ENCODE measurements at regions of chr13 and their contacts with region 1.

Region 1: GRCh38 chr13:48975856-48976575 is at the start of gene FNDC3A:
- DNase-seq: peak; percentile 84
- H3K4me3 ChIP-seq: peak within 1 kb of the TSS; percentile 57 to 77 (median 60)
- H3K27ac ChIP-seq: peak within 1 kb of the TSS; percentile 77
- H3K4me1 ChIP-seq: peaks cover 8% of the 10 kb centered on the region
- H3K27me3 ChIP-seq: no peaks in the 10 kb centered on the region
- CTCF ChIP-seq: no peak
- total RNA-seq, gene FNDC3A: 40.0 to 67.2 TPM

Region 2: DNA sequence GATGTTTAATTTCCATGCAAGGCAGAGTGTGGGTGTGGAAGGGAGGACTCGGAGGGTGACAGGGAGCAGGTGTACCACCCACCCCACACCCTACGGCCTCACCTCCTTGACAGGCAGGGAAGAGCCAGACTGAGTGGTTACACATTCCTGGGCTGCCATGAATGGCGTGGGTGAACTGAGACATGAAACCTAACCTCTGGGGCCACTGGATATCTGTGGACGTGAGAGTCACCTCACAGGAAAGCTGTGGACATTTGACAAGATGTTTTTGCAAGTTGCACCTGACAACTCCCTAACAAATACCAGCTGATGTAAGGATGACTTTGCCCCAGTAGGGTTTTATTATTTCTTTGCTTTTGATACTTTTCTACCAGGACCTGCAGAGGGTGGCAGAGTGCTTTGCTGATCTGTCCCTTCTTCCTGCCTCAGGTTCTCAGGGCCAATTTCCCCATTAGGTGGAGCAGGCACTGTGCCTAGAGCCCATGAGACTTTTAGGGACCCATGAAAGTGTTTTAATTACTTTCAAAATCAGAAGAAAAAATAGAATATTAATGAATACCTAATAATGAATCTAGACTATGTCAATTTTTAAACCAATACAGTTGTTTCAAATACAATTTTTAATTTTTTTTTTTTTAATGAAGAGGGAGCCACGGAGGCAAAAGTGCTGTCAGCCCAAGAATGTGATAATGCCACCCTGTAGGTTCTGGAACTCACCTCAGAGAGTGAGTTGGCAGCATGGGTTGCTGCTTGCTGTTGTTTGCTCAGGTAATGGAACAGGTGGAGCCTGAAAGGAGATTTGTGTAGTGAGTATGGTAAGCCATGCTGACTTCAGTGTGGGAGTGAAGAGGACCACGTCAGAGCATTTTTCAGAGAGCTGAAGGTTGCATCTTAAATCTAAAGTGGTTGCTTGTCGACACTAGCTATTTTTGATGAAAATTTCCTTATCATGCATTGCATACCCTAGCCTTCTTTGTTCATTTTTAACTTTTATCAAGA is 380.3 kb before region 1 on chr13:
- CTCF ChIA-PET with region 1: no interaction called
- dilution Hi-C with region 1: no loop called
- in situ Hi-C with region 1: no loop called
- intact Hi-C with region 1: loop called (anchors 5 kb)
- DNase-seq: peak; percentile 68
- H3K4me3 ChIP-seq: no peak overlapping the region
- H3K27ac ChIP-seq: no peak overlapping the region
- H3K4me1 ChIP-seq: peaks cover 3% of the 10 kb centered on the region
- H3K27me3 ChIP-seq: no peaks in the 10 kb centered on the region
- CTCF ChIP-seq: peak; percentile 49 to 90

Region 3: DNA sequence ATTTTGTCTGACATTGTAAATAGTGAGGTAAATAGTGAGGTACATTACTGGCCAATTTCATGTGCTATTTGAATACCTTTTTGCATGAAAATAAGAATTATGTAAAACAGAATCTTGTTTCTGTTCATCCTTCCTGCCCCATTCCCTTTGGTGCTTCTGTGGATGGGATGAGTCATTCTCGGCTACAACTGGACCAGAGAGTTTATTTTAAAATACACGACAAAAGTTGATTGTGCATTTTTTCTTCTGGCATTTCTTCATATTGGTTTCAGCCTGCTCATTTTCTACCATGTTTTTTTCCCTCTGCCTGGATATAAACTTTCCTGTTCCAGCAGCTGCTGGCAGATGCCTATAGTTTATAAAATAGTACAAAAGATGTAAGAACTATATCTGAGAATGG is 214.8 kb before region 1 on chr13:
- CTCF ChIA-PET with region 1: no interaction called
- dilution Hi-C with region 1: no loop called
- in situ Hi-C with region 1: no loop called
- intact Hi-C with region 1: no loop called
- DNase-seq: no peak
- H3K4me3 ChIP-seq: no peak overlapping the region
- H3K27ac ChIP-seq: no peak overlapping the region
- H3K4me1 ChIP-seq: no peaks in the 10 kb centered on the region
- H3K27me3 ChIP-seq: no peaks in the 10 kb centered on the region
- CTCF ChIP-seq: no peak

Region 4: DNA sequence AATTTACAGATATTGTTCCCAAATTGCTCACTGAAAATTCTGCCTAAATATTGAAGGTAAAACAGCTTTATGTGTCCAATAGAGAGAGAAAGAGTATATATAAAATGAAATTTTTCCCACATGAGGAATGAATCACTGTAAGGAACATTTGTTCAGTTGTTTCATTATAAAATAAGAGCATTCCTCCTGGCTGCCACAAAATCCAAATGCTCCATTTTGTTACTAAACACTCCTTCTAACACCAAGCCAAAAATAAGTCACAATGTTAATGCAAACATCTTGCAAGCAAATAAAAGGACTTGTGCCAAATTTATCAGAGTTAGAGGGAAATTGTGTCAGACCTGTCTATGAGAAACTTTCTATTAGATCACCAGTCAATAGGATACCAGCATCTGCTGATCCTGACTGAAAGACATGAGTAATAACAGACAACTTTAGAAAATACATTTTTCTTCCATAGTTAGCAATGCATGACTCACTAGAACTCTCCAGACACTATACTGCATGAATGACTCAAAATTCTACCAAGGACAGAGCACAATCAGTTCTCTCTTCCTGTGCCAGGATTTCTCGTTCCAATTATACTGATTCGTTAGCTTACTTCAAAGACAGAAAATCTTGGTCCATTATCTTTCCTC is 83.8 kb before region 1 on chr13:
- CTCF ChIA-PET with region 1: no interaction called
- dilution Hi-C with region 1: no loop called
- in situ Hi-C with region 1: no loop called
- intact Hi-C with region 1: loop called (anchors 5 kb)
- DNase-seq: peak; percentile 96
- H3K4me3 ChIP-seq: no peak overlapping the region
- H3K27ac ChIP-seq: peak overlapping the region; percentile 88
- H3K4me1 ChIP-seq: peaks cover 35% of the 10 kb centered on the region
- H3K27me3 ChIP-seq: no peaks in the 10 kb centered on the region
- CTCF ChIP-seq: no peak

Region 5: GRCh38 chr13:49082653-49083536 is 106.9 kb after region 1 on chr13:
- CTCF ChIA-PET with region 1: no interaction called
- dilution Hi-C with region 1: loop called (anchors 10 kb)
- in situ Hi-C with region 1: no loop called
- intact Hi-C with region 1: no loop called
- DNase-seq: peak; percentile 95
- H3K4me3 ChIP-seq: no peak overlapping the region
- H3K27ac ChIP-seq: peak overlapping the region; percentile 84
- H3K4me1 ChIP-seq: peaks cover 36% of the 10 kb centered on the region
- H3K27me3 ChIP-seq: no peaks in the 10 kb centered on the region
- CTCF ChIP-seq: no peak

Region 6: GRCh38 chr13:49110122-49110912 is 134.3 kb after region 1 on chr13:
- CTCF ChIA-PET with region 1: no interaction called
- dilution Hi-C with region 1: no loop called
- in situ Hi-C with region 1: no loop called
- intact Hi-C with region 1: loop called (anchors 1 kb)
- DNase-seq: peak; percentile 79
- H3K4me3 ChIP-seq: peak overlapping the region; percentile 26 to 99 (median 97)
- H3K27ac ChIP-seq: peak overlapping the region; percentile 90
- H3K4me1 ChIP-seq: peaks cover 13% of the 10 kb centered on the region
- H3K27me3 ChIP-seq: no peaks in the 10 kb centered on the region
- CTCF ChIP-seq: no peak

Region 7: GRCh38 chr13:49419276-49419675 is 443.3 kb after region 1 on chr13:
- CTCF ChIA-PET with region 1: no interaction called
- dilution Hi-C with region 1: no loop called
- in situ Hi-C with region 1: no loop called
- intact Hi-C with region 1: no loop called
- DNase-seq: no peak
- H3K4me3 ChIP-seq: no peak overlapping the region
- H3K27ac ChIP-seq: no peak overlapping the region
- H3K4me1 ChIP-seq: no peaks in the 10 kb centered on the region
- H3K27me3 ChIP-seq: no peaks in the 10 kb centered on the region
- CTCF ChIP-seq: no peak

Measured in mammary epithelial cell (primary cell).